ENCODE measurements at regions of chr14 and their contacts with region 1.

Region 1: GRCh38 chr14:61252369-61253063 is 28.6 kb downstream of the TMEM30B start:
- DNase-seq: peak; percentile 76
- H3K4me3 Mint-ChIP-seq: no peak overlapping the region
- H3K27ac Mint-ChIP-seq: no peak overlapping the region
- H3K4me1 Mint-ChIP-seq: peaks cover 8% of the 10 kb centered on the region
- H3K27me3 Mint-ChIP-seq: peaks cover 9% of the 10 kb centered on the region

Region 2: DNA sequence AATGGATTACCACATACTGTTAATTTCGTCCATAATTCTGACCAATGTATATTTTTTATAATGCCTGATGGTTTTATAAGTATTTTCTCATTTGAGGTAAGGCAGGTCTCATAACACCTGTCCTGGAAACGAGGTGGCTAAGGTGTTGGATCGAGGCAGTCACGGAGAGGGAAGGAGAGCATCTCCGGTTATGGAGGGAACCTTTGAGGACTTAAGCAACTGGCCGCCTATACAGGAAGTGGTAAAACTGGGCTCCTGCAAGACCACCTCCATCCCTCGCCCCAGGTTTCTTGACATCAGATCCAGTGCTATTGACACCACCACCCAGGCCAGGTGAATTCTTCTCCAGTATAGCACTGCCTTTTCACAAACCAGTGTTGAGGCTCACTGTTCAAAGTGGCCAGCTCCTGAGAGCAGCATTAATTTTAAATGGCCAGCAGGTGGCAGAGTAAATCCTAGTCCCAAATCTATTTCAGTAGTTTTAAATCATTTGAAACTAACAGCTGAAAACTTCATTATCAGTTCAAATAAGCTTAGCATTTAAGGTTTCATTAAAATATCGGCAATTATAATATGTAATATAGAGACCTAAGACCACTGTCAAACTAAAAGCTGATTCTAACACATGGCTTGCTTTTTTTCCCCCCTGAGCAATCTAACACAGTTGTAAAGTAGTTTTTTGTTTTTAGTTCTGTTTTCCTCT is 902.7 kb before region 1 on chr14:
- CTCF ChIA-PET with region 1: interaction called, 12 read pairs
- POLR2A ChIA-PET with region 1: no interaction called
- intact Hi-C with region 1: loop called (anchors 5 kb)
- DNase-seq: peak; percentile 24
- H3K4me3 Mint-ChIP-seq: no peak overlapping the region
- H3K27ac Mint-ChIP-seq: no peak overlapping the region
- H3K4me1 Mint-ChIP-seq: no peaks in the 10 kb centered on the region
- H3K27me3 Mint-ChIP-seq: no peaks in the 10 kb centered on the region

Region 3: GRCh38 chr14:60622917-60623257 is 629.6 kb before region 1 on chr14:
- CTCF ChIA-PET with region 1: interaction called, 75 read pairs
- POLR2A ChIA-PET with region 1: no interaction called
- intact Hi-C with region 1: loop called (anchors 1 kb)
- DNase-seq: no peak
- H3K4me3 Mint-ChIP-seq: no peak overlapping the region
- H3K27ac Mint-ChIP-seq: no peak overlapping the region
- H3K4me1 Mint-ChIP-seq: no peaks in the 10 kb centered on the region
- H3K27me3 Mint-ChIP-seq: peaks cover 20% of the 10 kb centered on the region

Region 4: GRCh38 chr14:60980811-60981632 is 271.5 kb before region 1 on chr14 and contains the starts of genes SLC38A6 and TRMT5:
- CTCF ChIA-PET with region 1: interaction called, 4 read pairs
- POLR2A ChIA-PET with region 1: no interaction called
- intact Hi-C with region 1: loop called (anchors 5 kb)
- DNase-seq: peak; percentile 95
- H3K4me3 Mint-ChIP-seq: no peak within 1 kb of the TSS
- H3K27ac Mint-ChIP-seq: no peak within 1 kb of the TSS
- H3K4me1 Mint-ChIP-seq: peaks cover 21% of the 10 kb centered on the region
- H3K27me3 Mint-ChIP-seq: no peaks in the 10 kb centered on the region
- total RNA-seq, gene SLC38A6: 5.4 to 5.6 TPM
- total RNA-seq, gene TRMT5: 18.2 to 18.3 TPM

Region 5: DNA sequence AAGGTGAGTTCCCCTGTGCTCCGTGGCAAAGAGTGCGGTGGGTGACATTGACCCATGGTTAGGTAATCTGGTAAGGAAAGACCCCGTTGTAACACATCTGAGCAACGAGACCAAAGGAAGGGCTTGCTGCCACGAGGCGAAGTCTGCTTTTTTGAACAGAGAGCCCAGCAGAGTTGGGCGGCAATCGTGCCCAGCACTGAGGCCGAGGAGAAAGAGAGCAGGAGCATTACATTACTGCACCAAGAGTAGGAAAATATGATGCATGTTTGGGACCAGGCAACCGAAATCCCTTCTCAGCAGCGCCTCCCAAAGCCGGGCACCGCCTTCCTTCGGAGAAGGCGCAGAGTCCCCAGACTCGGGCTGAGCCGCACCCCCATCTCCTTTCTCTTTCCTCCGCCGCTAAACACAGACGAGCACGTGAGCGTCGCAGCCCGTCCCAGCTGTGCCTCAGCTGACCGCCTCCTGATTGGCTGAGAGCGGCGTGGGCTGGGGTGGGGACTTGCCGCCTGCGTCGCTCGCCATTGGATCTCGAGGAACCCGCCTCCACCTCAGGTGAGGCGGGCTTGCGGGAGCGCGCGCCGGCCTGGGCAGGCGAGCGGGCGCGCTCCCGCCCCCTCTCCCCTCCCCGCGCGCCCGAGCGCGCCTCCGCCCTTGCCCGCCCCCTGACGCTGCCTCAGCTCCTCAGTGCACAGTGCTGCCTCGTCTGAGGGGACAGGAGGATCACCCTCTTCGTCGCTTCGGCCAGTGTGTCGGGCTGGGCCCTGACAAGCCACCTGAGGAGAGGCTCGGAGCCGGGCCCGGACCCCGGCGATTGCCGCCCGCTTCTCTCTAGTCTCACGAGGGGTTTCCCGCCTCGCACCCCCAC is 442.5 kb after region 1 on chr14 and contains the start of gene HIF1A:
- CTCF ChIA-PET with region 1: no interaction called
- POLR2A ChIA-PET with region 1: no interaction called
- intact Hi-C with region 1: no loop called
- DNase-seq: peak; percentile 99
- H3K4me3 Mint-ChIP-seq: peak within 1 kb of the TSS; percentile 98
- H3K27ac Mint-ChIP-seq: peak within 1 kb of the TSS; percentile 98
- H3K4me1 Mint-ChIP-seq: peaks cover 49% of the 10 kb centered on the region
- H3K27me3 Mint-ChIP-seq: no peaks in the 10 kb centered on the region
- total RNA-seq, gene HIF1A: 283 to 287 TPM